Aorta (tissue), 5 donors: ENCODE measurements at regions of chr19 and their contacts with region 1.

Region 1: DNA sequence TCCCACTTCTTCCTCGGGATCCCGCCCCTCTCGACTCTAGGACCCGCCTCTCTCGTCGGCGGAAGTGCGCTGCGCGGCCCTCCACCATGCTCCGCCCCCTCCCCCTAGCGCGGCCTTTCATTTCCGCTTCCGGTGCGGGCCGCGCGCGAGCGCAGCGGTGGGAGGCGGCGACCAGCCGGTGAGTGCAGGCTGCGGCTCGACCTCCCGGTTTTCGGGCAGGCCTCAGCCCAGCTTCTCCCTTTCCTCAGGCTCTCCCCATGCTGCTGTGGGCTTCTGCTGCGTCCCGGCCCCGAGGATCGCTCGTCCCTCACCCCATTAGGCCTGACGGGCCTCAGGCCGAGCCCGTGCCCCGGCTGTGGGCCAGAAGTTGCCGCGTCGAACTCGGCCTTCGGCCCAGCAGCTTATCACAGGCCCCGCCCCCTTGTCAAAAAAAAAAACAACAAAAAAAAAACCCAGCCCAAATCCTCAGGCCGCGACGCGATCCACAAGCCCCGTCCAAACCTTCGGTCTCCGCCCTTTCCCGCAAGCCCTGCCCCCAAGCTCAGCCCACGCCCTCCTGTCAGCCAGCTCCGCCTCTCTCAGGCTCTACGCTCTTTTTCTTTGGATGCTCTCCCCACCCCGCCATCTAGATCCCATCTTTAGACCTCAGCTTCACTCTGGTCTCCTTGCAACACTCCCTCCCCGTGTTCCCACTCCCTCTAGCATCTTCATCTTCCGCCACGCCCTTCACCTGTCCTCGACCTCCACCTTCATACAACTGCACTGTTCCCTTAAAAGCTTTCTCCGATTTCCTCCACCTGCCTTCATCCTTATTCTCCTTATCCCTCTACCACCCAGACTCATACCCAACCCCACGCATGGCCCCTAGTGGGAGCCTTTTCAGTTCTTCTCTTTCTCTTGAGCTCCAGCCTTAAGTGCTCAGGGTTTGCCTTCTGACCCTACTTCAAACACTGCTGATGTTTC is at the start of gene CLASRP:
- DNase-seq: peak; percentile 96 to 97
- ATAC-seq: peak; percentile 99
- H3K4me3 ChIP-seq: peak within 1 kb of the TSS; percentile 65 to 86
- H3K27ac ChIP-seq: peak within 1 kb of the TSS in 1 of 2 donors; percentile 89
- H3K4me1 ChIP-seq: no peaks in the 10 kb centered on the region
- H3K27me3 ChIP-seq: no peaks in the 10 kb centered on the region
- total RNA-seq, gene CLASRP: 79.9 to 105 TPM

Region 2: GRCh38 chr19:45079063-45079910 is 40.1 kb after region 1 on chr19 and contains the start of gene GEMIN7:
- intact Hi-C with region 1: loop called in 1 of 2 experiments (anchors 5 kb)
- DNase-seq: peak; percentile 76 to 91
- ATAC-seq: peak; percentile 92
- H3K4me3 ChIP-seq: peak within 1 kb of the TSS; percentile 36 to 88
- H3K27ac ChIP-seq: no peak within 1 kb of the TSS
- H3K4me1 ChIP-seq: no peaks in the 10 kb centered on the region
- H3K27me3 ChIP-seq: no peaks in the 10 kb centered on the region
- total RNA-seq, gene GEMIN7: 8.0 to 12.3 TPM

Region 3: GRCh38 chr19:45250832-45251451 is 211.7 kb after region 1 on chr19 and contains the start of gene MARK4:
- intact Hi-C with region 1: no loop called
- DNase-seq: peak; percentile 67 to 85
- ATAC-seq: peak; percentile 67
- H3K4me3 ChIP-seq: peak within 1 kb of the TSS; percentile 83 to 97
- H3K27ac ChIP-seq: no peak within 1 kb of the TSS
- H3K4me1 ChIP-seq: no peaks in the 10 kb centered on the region
- H3K27me3 ChIP-seq: no peaks in the 10 kb centered on the region
- total RNA-seq, gene MARK4: 40.3 to 40.4 TPM